Mammary epithelial cell (primary cell): ENCODE measurements at regions of chr10 and their contacts with region 1.

Region 1: GRCh38 chr10:29131952-29132820 is 156.7 kb upstream of the LYZL1 start:
- DNase-seq: no peak
- H3K4me3 ChIP-seq: no peak overlapping the region
- H3K27ac ChIP-seq: no peak overlapping the region
- H3K4me1 ChIP-seq: peaks cover 4% of the 10 kb centered on the region
- H3K27me3 ChIP-seq: no peaks in the 10 kb centered on the region
- CTCF ChIP-seq: no peak

Region 2: DNA sequence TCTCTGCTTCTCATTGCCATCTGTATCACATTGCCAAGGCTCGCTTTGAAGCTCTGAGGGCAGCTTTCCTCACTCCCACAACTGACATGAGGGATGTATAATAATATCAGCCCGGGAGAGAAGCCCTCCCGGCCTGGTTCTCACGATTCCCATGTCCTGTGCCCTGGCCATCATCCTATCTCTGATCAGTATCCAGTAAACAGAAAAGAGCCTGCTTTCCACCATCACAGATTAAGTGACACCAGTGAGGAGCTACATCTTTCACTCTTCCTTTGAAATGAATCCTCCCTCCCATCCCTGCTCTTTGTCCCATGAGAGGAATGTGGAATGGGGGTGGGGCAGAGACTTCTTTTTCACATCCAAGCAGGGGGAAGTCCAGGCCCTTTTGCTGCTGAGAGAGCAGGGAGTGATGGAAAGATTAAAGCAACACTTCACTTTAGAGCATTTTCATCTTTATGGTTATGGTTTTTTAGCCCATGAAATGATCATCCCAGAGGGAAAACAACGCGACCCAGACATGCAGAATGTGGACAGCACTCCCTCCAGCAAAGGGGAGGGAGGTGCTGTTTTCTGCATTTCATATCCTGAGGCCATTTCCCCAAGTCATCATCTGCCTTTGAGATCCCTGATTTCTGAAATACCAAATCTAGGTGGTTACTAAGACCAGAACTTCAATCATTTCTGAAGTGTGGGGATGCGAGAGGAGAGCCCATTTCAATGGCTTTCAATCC is 72.0 kb after region 1 on chr10:
- CTCF ChIA-PET with region 1: no interaction called
- dilution Hi-C with region 1: loop called (anchors 5 kb)
- in situ Hi-C with region 1: no loop called
- intact Hi-C with region 1: no loop called
- DNase-seq: no peak
- H3K4me3 ChIP-seq: no peak overlapping the region
- H3K27ac ChIP-seq: no peak overlapping the region
- H3K4me1 ChIP-seq: no peaks in the 10 kb centered on the region
- H3K27me3 ChIP-seq: peaks cover 2% of the 10 kb centered on the region
- CTCF ChIP-seq: no peak

Region 3: GRCh38 chr10:29239569-29240472 is 107.6 kb after region 1 on chr10:
- CTCF ChIA-PET with region 1: interaction called, 13 read pairs
- dilution Hi-C with region 1: no loop called
- in situ Hi-C with region 1: no loop called
- intact Hi-C with region 1: no loop called
- DNase-seq: no peak
- H3K4me3 ChIP-seq: no peak overlapping the region
- H3K27ac ChIP-seq: no peak overlapping the region
- H3K4me1 ChIP-seq: no peaks in the 10 kb centered on the region
- H3K27me3 ChIP-seq: peaks cover 7% of the 10 kb centered on the region
- CTCF ChIP-seq: peak; percentile 30 to 48

Region 4: GRCh38 chr10:29304264-29305030 is 172.3 kb after region 1 on chr10:
- CTCF ChIA-PET with region 1: no interaction called
- dilution Hi-C with region 1: no loop called
- in situ Hi-C with region 1: no loop called
- intact Hi-C with region 1: loop called (anchors 1 kb)
- DNase-seq: peak; percentile 43
- H3K4me3 ChIP-seq: no peak overlapping the region
- H3K27ac ChIP-seq: no peak overlapping the region
- H3K4me1 ChIP-seq: no peaks in the 10 kb centered on the region
- H3K27me3 ChIP-seq: no peaks in the 10 kb centered on the region
- CTCF ChIP-seq: peak; percentile 77 to 91